Activated CD8-positive, alpha-beta T cell treated with anti-CD3 and anti-CD28 coated beads for 36 hours (primary cell): ENCODE measurements at regions of chr19 and their contacts with region 1.

Region 1: DNA sequence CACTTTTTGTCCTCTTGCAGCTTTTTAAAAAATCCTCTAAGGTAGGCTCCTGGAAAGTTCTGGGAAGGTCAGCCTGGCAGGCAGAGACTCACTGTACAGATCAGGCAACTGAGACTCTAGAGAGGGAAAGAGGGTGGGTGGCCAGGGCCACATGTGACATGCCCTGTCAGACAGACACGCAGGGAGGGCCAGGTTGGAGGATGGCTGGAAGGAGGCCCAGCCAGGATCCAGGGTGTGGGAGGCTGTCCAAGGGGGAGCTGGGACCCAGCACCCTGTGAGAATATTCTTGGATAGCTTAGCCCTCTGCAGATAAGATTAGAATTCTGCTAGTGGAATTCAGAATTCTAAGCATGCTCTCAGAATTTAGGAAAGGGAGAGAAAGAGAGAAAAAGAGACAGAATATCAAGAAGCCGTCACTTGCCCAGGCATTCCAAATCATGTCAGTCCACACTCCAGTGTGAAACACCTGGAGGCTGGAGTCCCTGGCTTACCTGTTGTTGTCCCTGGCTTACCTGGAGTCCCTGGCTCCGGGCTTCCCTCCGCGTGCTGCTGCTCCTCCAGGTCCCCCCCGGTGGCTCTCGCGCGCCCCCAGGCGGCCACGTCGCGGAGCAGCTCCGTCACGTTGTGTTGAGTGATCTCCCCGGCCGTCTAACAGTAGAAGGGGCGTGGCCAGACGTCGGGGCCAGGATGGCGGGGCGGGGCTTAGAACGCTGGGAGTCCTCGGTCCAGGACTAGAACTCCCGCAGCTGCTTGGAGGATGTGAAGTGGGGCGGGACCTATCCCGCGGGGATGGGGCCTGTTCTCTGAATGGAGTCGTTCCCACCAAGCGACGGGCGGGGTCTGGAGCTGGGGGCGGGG is 2.8 kb upstream of the TNNI3 start:
- DNase-seq: peak; percentile 96
- ATAC-seq: peak; percentile 98
- H3K4me3 Mint-ChIP-seq: no peak overlapping the region
- H3K27ac Mint-ChIP-seq: no peak overlapping the region
- H3K4me1 Mint-ChIP-seq: peaks cover 8% of the 10 kb centered on the region
- H3K27me3 Mint-ChIP-seq: peaks cover 46% of the 10 kb centered on the region
- CTCF ChIP-seq: peak; percentile 94

Region 2: GRCh38 chr19:55088543-55089341 is 71.6 kb before region 1 on chr19:
- CTCF ChIA-PET with region 1: interaction called, 19 read pairs
- POLR2A ChIA-PET with region 1: no interaction called
- intact Hi-C with region 1: no loop called
- DNase-seq: peak; percentile 89
- ATAC-seq: peak; percentile 59
- H3K4me3 Mint-ChIP-seq: no peak overlapping the region
- H3K27ac Mint-ChIP-seq: no peak overlapping the region
- H3K4me1 Mint-ChIP-seq: peaks cover 14% of the 10 kb centered on the region
- H3K27me3 Mint-ChIP-seq: peaks cover 38% of the 10 kb centered on the region
- CTCF ChIP-seq: peak; percentile 97

Region 3: DNA sequence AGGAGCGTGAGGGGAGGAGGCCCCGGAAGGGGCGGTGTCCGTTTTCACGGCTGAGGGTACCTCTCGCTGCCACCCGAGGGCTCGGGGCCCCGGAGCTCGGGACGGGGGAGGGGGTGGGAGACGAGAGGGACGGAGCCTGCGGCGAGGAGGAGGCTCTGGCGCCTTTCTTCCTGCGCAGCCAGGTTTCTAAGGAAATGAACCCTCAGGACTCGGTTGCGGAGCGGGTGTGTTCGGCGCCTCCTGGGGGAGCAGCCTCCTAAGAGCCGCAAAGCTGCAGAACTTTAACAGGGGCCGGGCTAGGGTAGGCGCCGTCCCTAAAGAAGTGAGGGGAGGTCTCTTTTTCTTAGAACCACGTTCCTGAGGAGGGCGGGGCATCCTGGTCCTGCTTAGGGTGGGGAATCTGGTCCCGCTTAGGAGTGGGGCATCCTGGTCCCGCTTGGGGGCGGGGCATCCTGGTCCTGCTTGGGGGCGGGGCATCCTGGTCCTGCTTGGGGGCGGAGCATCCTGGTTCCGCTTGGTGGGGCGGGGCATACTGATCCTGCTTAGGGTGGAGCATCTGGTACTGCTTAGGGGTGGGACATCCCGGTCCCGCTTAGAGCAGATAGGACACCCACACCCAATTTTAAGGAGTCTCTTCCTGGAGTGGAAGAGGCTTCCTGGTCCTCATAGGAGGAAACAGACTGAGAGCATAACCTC is 13.5 kb after region 1 on chr19:
- CTCF ChIA-PET with region 1: interaction called, 16 read pairs
- POLR2A ChIA-PET with region 1: interaction called, 3 read pairs
- intact Hi-C with region 1: no loop called
- DNase-seq: peak; percentile 55
- ATAC-seq: peak; percentile 60
- H3K4me3 Mint-ChIP-seq: peak overlapping the region; percentile 47
- H3K27ac Mint-ChIP-seq: no peak overlapping the region
- H3K4me1 Mint-ChIP-seq: peaks cover 16% of the 10 kb centered on the region
- H3K27me3 Mint-ChIP-seq: peaks cover 72% of the 10 kb centered on the region
- CTCF ChIP-seq: no peak

Region 4: DNA sequence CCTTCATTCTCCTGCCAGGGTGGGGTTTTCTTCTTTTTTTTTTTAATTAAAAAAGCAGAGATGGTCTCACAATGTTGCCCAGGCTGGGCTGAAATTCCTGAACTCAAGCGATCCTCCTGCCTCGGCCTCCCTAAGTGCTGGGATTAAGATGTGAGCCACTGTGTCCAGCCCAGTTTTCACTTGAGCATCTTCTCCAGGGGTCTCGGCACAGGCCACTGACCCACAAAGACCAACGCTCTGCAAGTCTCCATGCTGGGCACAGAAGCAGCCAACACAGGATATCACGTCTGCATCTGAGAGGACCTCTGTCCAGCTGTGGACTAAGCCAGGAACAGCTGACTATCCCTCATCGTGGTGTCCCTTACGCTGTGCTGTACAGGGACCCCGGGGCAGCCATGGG is 77.7 kb after region 1 on chr19:
- CTCF ChIA-PET with region 1: no interaction called
- POLR2A ChIA-PET with region 1: no interaction called
- intact Hi-C with region 1: no loop called
- DNase-seq: no peak
- ATAC-seq: no peak
- H3K4me3 Mint-ChIP-seq: no peak overlapping the region
- H3K27ac Mint-ChIP-seq: no peak overlapping the region
- H3K4me1 Mint-ChIP-seq: no peaks in the 10 kb centered on the region
- H3K27me3 Mint-ChIP-seq: no peaks in the 10 kb centered on the region
- CTCF ChIP-seq: no peak